Activated CD8-positive, alpha-beta T cell treated with anti-CD3 and anti-CD28 coated beads for 36 hours (primary cell): ENCODE measurements at regions of chr20 and their contacts with region 1.

Region 1: GRCh38 chr20:56554869-56555268 is 21.8 kb downstream of the FAM209B start:
- DNase-seq: peak; percentile 15
- ATAC-seq: peak; percentile 74
- H3K4me3 Mint-ChIP-seq: no peak overlapping the region
- H3K27ac Mint-ChIP-seq: no peak overlapping the region
- H3K4me1 Mint-ChIP-seq: peaks cover 8% of the 10 kb centered on the region
- H3K27me3 Mint-ChIP-seq: peaks cover 5% of the 10 kb centered on the region
- CTCF ChIP-seq: no peak

Region 2: DNA sequence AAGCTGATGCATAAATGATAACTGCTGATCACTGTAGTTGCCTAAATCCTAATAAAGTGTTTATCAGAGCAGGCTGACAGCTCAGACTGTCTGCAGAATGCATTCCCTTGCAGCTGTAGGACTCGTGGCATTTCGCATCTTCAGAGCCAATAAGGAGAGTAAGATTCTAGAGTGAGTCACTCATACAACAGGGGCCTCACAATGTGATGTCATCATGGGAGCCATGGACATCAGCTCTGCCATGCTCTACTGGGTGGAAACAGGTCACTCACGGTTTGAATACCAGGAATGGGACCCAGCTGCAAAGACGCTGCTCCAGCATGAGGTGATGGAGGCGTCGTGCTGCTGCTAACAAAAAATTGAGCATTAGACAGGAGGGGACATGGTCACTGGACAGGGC is 14.4 kb before region 1 on chr20:
- CTCF ChIA-PET with region 1: interaction called, 12 read pairs
- POLR2A ChIA-PET with region 1: no interaction called
- intact Hi-C with region 1: no loop called
- DNase-seq: no peak
- ATAC-seq: no peak
- H3K4me3 Mint-ChIP-seq: no peak overlapping the region
- H3K27ac Mint-ChIP-seq: no peak overlapping the region
- H3K4me1 Mint-ChIP-seq: no peaks in the 10 kb centered on the region
- H3K27me3 Mint-ChIP-seq: no peaks in the 10 kb centered on the region
- CTCF ChIP-seq: no peak

Region 3: GRCh38 chr20:56566271-56566981 is 11.6 kb after region 1 on chr20:
- CTCF ChIA-PET with region 1: interaction called, 10 read pairs
- POLR2A ChIA-PET with region 1: interaction called, 5 read pairs
- intact Hi-C with region 1: no loop called
- DNase-seq: no peak
- ATAC-seq: no peak
- H3K4me3 Mint-ChIP-seq: no peak overlapping the region
- H3K27ac Mint-ChIP-seq: no peak overlapping the region
- H3K4me1 Mint-ChIP-seq: no peaks in the 10 kb centered on the region
- H3K27me3 Mint-ChIP-seq: peaks cover 5% of the 10 kb centered on the region
- CTCF ChIP-seq: no peak

Region 4: GRCh38 chr20:56579287-56579710 is 24.4 kb after region 1 on chr20:
- CTCF ChIA-PET with region 1: interaction called, 12 read pairs
- POLR2A ChIA-PET with region 1: no interaction called
- intact Hi-C with region 1: no loop called
- DNase-seq: no peak
- ATAC-seq: no peak
- H3K4me3 Mint-ChIP-seq: no peak overlapping the region
- H3K27ac Mint-ChIP-seq: no peak overlapping the region
- H3K4me1 Mint-ChIP-seq: no peaks in the 10 kb centered on the region
- H3K27me3 Mint-ChIP-seq: peaks cover 7% of the 10 kb centered on the region
- CTCF ChIP-seq: no peak

Region 5: DNA sequence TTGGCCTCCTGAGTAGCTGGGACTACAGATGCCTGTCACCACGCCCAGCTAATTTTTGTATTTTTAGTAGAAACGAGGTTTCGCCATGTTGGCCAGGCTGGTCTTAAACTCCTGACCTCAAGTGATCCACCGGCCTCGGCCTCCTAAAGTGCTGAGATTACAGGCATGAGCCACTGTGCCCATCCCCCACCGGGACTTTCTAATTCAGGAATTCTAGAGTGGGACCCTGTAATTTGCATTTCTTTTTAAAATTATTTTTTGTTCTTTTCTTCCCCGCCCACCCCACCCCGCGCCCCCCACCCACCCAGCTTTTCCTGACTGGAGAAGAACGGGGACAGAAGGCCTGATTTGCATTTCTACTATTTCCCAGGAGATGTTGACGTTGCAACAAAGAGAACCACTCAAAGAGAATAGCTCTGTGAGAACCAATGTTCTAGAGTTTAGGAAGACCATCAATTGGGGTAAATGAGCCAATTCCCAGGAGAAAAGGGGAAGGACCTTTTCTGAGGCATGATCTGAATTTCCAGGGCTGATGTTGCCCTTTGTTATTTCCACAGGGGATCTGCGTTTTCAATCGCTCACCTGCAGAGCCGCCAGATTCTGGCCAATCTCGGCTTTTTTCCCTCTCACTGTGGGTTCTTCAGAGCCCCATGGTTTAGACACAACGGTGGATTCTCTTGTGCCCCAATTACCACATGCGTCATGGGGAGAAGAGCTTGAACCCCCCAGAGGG is 41.0 kb after region 1 on chr20:
- CTCF ChIA-PET with region 1: no interaction called
- POLR2A ChIA-PET with region 1: no interaction called
- intact Hi-C with region 1: no loop called
- DNase-seq: no peak
- ATAC-seq: no peak
- H3K4me3 Mint-ChIP-seq: no peak overlapping the region
- H3K27ac Mint-ChIP-seq: no peak overlapping the region
- H3K4me1 Mint-ChIP-seq: no peaks in the 10 kb centered on the region
- H3K27me3 Mint-ChIP-seq: no peaks in the 10 kb centered on the region
- CTCF ChIP-seq: no peak

Region 6: DNA sequence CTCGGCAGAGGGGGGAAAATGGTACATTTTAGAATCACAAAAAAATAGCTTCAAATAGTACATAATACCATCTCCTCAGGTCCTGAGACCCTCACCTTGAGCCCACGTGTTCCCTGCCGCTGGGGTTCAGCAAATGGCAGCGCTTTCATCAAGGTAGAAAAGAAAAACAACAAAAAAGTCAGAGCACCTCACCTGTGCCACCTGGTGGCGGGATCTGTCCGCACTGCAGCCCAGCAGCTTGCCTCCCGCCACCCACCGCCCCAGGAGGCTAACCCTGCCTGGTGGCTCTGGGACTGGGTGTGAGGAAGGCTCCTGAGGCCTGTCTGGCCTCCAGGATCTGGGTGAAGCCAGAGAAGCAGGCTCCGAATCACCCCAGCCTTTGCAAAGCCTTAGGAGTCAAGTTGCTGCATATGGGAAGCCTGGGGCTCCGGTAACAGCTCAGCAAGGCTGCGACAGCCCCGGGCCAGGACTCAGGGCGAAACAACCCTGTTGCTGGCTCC is 440.8 kb after region 1 on chr20:
- CTCF ChIA-PET with region 1: interaction called, 7 read pairs
- POLR2A ChIA-PET with region 1: no interaction called
- intact Hi-C with region 1: loop called (anchors 10 kb)
- DNase-seq: peak; percentile 40
- ATAC-seq: peak; percentile 39
- H3K4me3 Mint-ChIP-seq: no peak overlapping the region
- H3K27ac Mint-ChIP-seq: no peak overlapping the region
- H3K4me1 Mint-ChIP-seq: no peaks in the 10 kb centered on the region
- H3K27me3 Mint-ChIP-seq: no peaks in the 10 kb centered on the region
- CTCF ChIP-seq: peak; percentile 56